ENCODE measurements at regions of chr2 and their contacts with region 1.

Region 1: DNA sequence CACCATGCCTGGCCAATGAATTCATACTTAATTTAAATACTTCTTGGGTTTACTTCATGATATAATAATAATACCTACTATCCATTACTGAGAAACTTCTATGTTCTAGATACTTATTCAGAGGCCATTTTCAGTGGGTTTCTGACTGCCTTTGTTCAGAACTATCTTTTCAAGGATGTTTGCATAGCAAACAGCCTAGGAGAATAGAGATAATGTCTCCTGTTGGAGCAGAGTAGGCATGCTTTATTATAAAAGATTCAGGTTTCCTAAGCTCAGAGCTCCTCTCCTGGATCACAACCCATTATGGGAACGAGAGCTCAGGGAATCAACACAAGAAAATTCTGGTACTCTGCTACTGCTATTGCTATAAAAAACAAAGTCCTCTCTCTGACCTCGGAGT is 11.1 kb downstream of the FASTKD1 start:
- DNase-seq: no peak
- H3K4me3 Mint-ChIP-seq: no peak overlapping the region
- H3K27ac Mint-ChIP-seq: no peak overlapping the region
- H3K4me1 Mint-ChIP-seq: peaks cover under 1% of the 10 kb centered on the region
- H3K27me3 Mint-ChIP-seq: no peaks in the 10 kb centered on the region

Region 2: DNA sequence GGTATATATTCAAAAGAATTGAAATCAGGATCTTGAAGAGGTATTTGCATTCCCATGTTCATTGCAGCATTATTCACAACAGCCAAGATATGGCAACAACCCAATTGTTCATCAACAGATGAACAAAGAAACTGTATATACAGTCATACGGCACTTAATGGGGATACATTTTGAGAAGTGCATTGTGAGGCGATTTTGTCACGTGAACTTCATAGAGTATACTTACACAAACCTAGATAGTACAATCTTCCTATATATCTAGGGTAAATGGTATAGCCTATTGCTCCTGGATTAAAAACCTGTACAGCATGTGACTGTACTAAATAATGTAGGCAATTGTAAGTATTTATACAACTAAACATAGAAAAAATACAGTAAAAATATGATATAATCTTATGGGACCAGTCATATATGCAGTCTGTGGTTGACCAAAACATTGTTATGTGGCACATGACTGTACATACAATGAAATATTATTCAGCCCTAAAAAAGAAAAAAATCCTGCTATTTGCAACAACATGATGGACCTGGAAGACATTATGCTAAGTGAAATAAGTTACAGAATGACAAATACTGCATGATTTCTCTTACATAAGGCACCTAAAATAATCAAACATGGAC is 92.5 kb before region 1 on chr2:
- intact Hi-C with region 1: loop called (anchors 2 kb)
- DNase-seq: no peak
- H3K4me3 Mint-ChIP-seq: no peak overlapping the region
- H3K27ac Mint-ChIP-seq: no peak overlapping the region
- H3K4me1 Mint-ChIP-seq: no peaks in the 10 kb centered on the region
- H3K27me3 Mint-ChIP-seq: peaks cover 2% of the 10 kb centered on the region

Measured in activated T-helper 2 cell treated with anti-CD3 and anti-CD28 coated beads, Interferon-gamma antibody, Interleukin-2, Interleukin-4, amounts not matched to agents 10 μg/mL and 5 μg/mL and 100 μg/mL, durations not matched to agents 14 hours and 24 hours and 36 hours (primary cell).